ENCODE measurements at regions of chr6 and their contacts with region 1.

Region 1: DNA sequence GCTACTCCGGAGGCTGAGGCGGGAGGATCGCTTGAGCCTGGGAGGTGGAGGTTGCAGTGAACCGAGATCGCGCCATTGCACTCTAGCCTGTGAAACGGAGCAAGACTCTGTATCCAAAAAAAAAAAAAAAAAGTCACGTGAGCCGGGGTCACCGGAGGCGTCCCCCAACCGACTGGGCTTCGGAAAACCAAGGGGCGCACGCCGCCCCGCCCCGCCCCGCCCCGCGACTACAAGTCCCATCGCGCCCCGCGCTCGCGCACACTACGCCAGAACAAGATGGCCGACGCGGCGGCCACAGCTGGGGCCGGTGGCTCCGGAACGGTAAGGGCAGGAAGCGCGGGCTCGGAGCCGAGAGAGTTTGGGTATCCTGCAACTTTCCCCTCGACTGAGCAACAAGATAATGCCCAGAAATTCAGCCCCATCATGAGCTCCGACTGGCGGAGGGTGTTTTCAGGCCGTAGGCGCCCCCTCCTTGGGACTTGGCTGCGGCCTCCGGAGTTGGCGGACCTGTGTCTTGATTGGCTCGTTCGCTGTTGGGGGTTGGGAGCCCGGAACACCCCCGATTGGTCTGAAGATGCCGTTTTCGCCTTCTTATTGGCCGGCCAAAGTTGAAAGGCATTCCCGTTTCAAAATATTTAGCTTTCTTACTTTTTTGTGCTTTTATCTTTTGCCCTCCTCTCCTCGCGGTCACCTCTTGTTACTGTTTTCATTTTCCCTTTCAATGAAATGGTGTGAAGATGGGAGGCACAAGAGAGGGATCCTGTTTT is at the start of gene TAF8:
- DNase-seq: peak; percentile 90
- H3K4me3 Mint-ChIP-seq: peak within 1 kb of the TSS; percentile 94
- H3K27ac Mint-ChIP-seq: peak within 1 kb of the TSS; percentile 98
- H3K4me1 Mint-ChIP-seq: peaks cover 50% of the 10 kb centered on the region
- H3K27me3 Mint-ChIP-seq: no peaks in the 10 kb centered on the region
- total RNA-seq, gene TAF8: 38.8 and 41.9 TPM in 2 replicates

Region 2: GRCh38 chr6:42217519-42218367 is 167.3 kb after region 1 on chr6 and contains the start of gene MRPS10:
- intact Hi-C with region 1: loop called (anchors 1 kb)
- DNase-seq: peak; percentile 88
- H3K4me3 Mint-ChIP-seq: peak within 1 kb of the TSS; percentile 95
- H3K27ac Mint-ChIP-seq: peak within 1 kb of the TSS; percentile 91
- H3K4me1 Mint-ChIP-seq: peaks cover 20% of the 10 kb centered on the region
- H3K27me3 Mint-ChIP-seq: no peaks in the 10 kb centered on the region
- total RNA-seq, gene MRPS10: 39.6 and 40.4 TPM in 2 replicates